ENCODE measurements at regions of chr11 and their contacts with region 1.

Region 1: GRCh38 chr11:60265373-60266214 is 14.9 kb upstream of the MS4A4A start:
- DNase-seq: peak; percentile 31
- CTCF ChIP-seq: peak; percentile 70

Region 2: GRCh38 chr11:60130496-60130895 is 135.1 kb before region 1 on chr11:
- CTCF ChIA-PET with region 1: no interaction called
- POLR2A ChIA-PET with region 1: no interaction called
- DNase-seq: peak; percentile 23
- CTCF ChIP-seq: peak; percentile 35

Region 3: GRCh38 chr11:60235321-60235720 is 30.3 kb before region 1 on chr11:
- CTCF ChIA-PET with region 1: interaction called, 14 read pairs
- POLR2A ChIA-PET with region 1: no interaction called
- DNase-seq: no peak
- CTCF ChIP-seq: no peak

Region 4: GRCh38 chr11:60318726-60319125 is 53.1 kb after region 1 on chr11:
- CTCF ChIA-PET with region 1: interaction called, 12 read pairs
- POLR2A ChIA-PET with region 1: no interaction called
- DNase-seq: no peak
- CTCF ChIP-seq: no peak

Region 5: DNA sequence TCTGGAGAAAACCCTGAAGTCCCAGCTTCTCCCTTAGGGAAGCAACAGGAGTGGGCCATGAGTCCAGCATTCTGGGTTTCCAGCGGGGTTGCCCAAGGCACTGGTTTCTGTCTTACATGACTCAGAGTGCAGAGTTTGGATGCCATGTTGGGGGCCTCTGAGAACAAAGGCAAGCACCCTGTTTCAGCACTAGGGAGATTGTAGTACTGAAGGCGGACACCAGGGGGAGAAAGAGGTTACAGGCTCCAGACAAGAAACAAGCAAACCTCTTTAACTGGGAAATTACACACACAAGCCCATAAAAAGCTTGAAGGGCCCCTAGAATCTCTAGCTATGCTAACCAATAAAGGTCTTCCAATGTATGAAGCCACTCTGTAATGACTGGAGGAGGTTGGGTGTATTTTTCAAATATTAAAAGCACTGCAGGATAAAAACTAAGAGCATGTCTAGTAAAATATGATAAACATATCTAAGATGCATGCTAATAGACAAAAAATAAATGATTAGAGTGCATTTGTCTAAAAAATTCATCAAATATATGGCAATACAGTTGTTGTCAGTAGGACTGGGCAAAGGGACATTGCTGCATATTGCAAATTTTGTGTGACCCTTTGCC is 68.5 kb after region 1 on chr11:
- CTCF ChIA-PET with region 1: interaction called, 35 read pairs
- POLR2A ChIA-PET with region 1: no interaction called
- DNase-seq: peak; percentile 63
- CTCF ChIP-seq: peak; percentile 64

Region 6: DNA sequence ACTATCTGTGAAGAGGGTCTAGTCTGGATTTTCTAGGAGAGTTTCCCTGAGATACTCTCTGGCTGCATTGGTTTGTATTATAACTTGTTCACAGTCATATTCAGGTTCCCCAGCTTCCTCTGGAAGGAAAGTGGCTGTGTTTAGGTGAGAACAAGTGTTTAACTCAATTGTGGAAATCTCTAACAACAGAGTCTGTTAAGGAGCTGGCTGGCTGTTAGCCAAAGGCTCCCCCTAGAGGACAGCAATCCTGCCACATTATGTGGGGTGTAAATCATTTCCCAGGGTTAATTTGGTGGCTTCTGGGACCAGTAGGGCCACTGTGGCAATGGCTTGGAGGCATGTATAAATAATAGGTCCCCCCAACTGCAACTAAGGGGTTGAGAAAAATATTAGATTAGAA is 79.9 kb after region 1 on chr11:
- CTCF ChIA-PET with region 1: interaction called, 42 read pairs
- POLR2A ChIA-PET with region 1: no interaction called
- DNase-seq: no peak
- CTCF ChIP-seq: peak; percentile 62

Region 7: DNA sequence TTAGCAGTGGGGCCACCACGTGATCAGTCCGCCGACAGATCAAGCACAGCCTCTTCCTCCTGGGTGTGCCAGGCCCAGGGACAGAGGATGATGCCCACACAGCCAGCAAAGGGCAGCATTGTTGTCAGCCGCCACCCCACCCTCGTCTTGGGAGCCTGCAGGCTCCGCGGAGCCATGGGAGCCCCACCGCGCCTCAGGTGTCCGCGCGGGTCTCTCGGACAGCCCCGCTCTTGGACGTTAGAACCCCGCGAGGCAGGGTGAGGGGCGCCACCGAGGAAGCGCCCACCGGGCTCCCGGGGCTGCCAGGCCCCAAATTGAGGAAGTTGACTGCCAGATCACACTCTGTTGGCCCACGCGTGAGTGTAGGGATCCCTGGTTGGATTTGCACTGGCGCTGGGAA is 349.9 kb after region 1 on chr11:
- CTCF ChIA-PET with region 1: interaction called, 12 read pairs
- POLR2A ChIA-PET with region 1: no interaction called
- DNase-seq: no peak
- CTCF ChIP-seq: no peak

Region 8: DNA sequence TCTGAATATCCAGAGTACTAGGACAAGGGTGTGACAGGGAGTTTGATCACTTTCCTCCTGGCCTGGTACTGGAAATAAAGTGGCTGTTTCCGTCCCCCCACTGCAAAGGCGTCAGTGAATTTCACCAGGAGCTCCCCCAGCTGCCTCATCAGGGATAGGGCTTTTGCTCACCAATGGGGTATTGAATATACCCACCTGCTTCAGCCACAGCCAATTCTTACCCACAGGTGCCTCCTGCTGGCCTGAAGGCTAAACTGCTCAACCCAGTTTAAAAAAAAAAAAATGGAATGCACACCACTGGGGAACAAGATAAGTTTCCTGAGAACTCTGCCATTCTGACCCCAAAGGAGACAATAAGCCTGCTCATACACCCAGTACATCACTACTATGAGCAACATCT is 368.5 kb after region 1 on chr11:
- CTCF ChIA-PET with region 1: interaction called, 11 read pairs
- POLR2A ChIA-PET with region 1: no interaction called
- DNase-seq: peak; percentile 31
- CTCF ChIP-seq: peak; percentile 40

Region 9: DNA sequence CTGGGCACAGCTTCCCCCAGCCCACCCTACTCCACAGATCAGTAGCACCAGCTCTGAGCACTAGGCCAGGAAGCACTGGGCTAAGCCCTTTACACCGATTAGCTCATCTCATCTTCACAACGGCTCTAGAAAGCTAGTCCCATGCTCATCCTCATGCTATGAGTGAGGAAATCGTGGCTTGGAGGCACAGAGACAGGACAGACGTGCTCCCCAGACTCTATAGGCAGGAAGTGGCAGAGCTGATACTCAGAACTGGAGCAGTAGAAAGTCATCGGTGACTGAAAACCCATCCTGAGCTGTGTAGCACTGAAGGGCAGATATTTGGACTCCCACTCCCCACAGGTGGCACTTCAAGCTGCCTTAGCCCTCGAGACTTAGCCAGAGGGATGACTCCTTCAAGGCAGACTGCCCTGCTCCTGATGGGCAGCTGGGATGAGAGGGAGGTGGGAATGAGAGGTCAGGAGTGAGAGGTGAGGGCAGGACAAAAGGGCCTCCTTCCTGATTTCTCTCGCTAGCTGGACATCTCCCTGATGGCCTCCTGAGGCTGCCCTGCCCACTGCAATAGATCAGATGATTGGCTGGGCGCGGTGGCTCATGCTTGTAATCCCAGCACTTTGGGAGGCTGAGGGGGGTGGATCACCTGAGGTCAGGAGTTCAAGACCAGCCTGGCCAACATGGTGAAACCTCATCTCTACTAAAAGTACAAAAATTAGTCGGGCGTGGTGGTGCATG is 846.4 kb after region 1 on chr11:
- CTCF ChIA-PET with region 1: no interaction called
- POLR2A ChIA-PET with region 1: no interaction called
- DNase-seq: no peak
- CTCF ChIP-seq: no peak